ENCODE measurements at regions of chr2 and their contacts with region 1.

Region 1: GRCh38 chr2:36780231-36780839 is 83.8 kb downstream of the VIT start:
- DNase-seq: no peak
- H3K4me3 ChIP-seq: no peak overlapping the region
- H3K27ac ChIP-seq: no peak overlapping the region
- H3K4me1 ChIP-seq: no peaks in the 10 kb centered on the region
- H3K27me3 ChIP-seq: no peaks in the 10 kb centered on the region
- CTCF ChIP-seq: peak; percentile 86

Region 2: GRCh38 chr2:36858551-36859365 is 78.4 kb after region 1 on chr2:
- intact Hi-C with region 1: loop called (anchors 5 kb)
- DNase-seq: no peak
- H3K4me3 ChIP-seq: no peak overlapping the region
- H3K27ac ChIP-seq: peak overlapping the region; percentile 41
- H3K4me1 ChIP-seq: no peaks in the 10 kb centered on the region
- H3K27me3 ChIP-seq: no peaks in the 10 kb centered on the region
- CTCF ChIP-seq: no peak

Measured in colonic mucosa (tissue), 4 donors.